Caco-2 (cell line): ENCODE measurements at regions of chr11 and their contacts with region 1.

Region 1: DNA sequence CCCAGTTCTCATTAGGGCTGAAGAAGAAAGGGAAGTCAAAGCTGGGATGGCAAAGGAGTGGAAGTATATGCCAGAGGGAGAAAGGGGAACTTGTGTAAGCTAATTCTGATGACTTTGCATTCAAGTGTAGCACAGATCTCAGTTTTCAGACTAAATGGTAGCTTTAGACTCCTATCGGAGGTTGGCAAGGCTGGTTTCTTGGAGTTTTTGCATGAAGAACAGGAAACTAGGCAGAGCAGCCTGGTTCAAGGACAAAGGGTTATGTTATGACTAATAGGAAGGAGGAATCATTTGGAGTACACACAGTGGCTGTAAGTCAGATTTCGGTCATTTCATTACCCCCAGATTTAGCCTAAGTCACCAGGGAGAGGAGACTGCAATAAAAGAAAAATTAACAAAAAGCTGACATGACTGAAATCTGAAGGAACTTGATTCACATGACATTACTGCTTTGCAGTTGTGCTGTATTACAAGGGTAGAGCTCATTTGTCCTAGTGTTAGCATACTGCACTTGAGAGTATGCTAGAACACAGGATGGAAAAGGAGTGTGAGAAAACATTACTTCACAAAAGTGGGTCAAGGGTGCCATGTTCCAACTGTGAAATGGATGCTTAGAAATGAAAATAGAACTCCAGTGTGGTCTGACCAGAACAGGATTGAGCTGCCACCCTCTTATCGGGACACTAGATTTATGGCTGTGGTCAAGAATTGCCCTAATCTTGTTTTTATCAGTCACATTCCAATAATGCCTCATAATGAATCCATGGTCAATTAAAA is 23.6 kb downstream of the ADM start:
- DNase-seq: peak; percentile 66 to 73
- H3K4me3 ChIP-seq: no peak overlapping the region
- H3K4me3 Mint-ChIP-seq: peak overlapping the region; percentile 39
- H3K27ac Mint-ChIP-seq: peak overlapping the region; percentile 14
- H3K4me1 ChIP-seq: peaks cover 63% of the 10 kb centered on the region
- H3K4me1 Mint-ChIP-seq: peaks cover 36% of the 10 kb centered on the region
- H3K27me3 ChIP-seq: no peaks in the 10 kb centered on the region
- H3K27me3 Mint-ChIP-seq: no peaks in the 10 kb centered on the region
- CTCF ChIP-seq: no peak

Region 2: GRCh38 chr11:10351768-10352641 is 23.5 kb after region 1 on chr11:
- CTCF ChIA-PET with region 1: interaction called, 6 read pairs
- POLR2A ChIA-PET with region 1: interaction called, 3 read pairs
- intact Hi-C with region 1: loop called (anchors 1 kb)
- DNase-seq: peak in 1 of 2 experiments; percentile 81
- H3K4me3 ChIP-seq: peak overlapping the region; percentile 20
- H3K4me3 Mint-ChIP-seq: peak overlapping the region; percentile 42
- H3K27ac Mint-ChIP-seq: peak overlapping the region; percentile 22
- H3K4me1 ChIP-seq: peaks cover 47% of the 10 kb centered on the region
- H3K4me1 Mint-ChIP-seq: peaks cover 14% of the 10 kb centered on the region
- H3K27me3 ChIP-seq: no peaks in the 10 kb centered on the region
- H3K27me3 Mint-ChIP-seq: no peaks in the 10 kb centered on the region
- CTCF ChIP-seq: no peak

Region 3: DNA sequence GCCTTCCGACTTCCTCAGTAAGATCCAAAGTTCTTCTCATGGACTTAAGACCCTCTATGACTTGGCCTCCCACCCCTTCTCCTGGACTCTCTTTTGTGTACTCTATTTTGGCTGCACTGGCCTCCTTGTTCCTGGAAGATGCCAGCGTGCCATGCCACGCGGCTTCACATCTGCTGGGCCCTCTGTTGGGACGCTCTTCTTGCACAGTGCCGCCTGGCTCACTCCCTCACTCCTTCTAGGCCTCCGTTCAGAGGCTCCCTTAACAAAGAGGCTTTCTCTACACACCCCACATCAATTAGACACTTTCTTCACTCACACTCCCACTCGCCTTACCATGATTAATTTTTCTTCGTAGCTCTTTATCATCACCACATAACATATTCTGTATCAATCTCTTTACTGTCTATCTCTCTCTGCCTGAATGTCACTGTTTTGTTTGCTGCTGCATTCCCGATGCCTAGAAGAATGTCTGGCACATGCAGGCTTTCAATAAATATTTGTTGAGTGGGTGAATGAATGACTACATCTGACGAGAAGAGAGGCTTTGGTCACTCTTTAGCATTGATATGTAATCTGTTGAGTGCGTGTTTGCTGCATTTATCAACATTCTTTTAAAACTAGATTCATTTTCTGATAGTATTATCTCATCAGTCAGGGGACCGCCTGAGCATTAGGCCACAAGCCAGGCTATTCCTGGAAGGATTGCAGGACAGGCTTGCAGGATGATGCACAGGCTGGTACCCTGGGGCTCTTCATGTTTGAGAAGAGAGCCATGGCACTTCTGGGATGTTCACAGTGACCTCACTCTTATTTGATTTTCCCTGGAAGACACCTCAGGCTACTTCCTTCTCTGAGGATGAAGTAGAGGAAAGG is 66.0 kb after region 1 on chr11:
- CTCF ChIA-PET with region 1: no interaction called
- POLR2A ChIA-PET with region 1: no interaction called
- intact Hi-C with region 1: loop called (anchors 1 kb)
- DNase-seq: peak; percentile 84 to 93
- H3K4me3 ChIP-seq: no peak overlapping the region
- H3K4me3 Mint-ChIP-seq: peak overlapping the region; percentile 57
- H3K27ac Mint-ChIP-seq: peak overlapping the region; percentile 80
- H3K4me1 ChIP-seq: peaks cover 66% of the 10 kb centered on the region
- H3K4me1 Mint-ChIP-seq: peaks cover 66% of the 10 kb centered on the region
- H3K27me3 ChIP-seq: no peaks in the 10 kb centered on the region
- H3K27me3 Mint-ChIP-seq: no peaks in the 10 kb centered on the region
- CTCF ChIP-seq: no peak

Region 4: DNA sequence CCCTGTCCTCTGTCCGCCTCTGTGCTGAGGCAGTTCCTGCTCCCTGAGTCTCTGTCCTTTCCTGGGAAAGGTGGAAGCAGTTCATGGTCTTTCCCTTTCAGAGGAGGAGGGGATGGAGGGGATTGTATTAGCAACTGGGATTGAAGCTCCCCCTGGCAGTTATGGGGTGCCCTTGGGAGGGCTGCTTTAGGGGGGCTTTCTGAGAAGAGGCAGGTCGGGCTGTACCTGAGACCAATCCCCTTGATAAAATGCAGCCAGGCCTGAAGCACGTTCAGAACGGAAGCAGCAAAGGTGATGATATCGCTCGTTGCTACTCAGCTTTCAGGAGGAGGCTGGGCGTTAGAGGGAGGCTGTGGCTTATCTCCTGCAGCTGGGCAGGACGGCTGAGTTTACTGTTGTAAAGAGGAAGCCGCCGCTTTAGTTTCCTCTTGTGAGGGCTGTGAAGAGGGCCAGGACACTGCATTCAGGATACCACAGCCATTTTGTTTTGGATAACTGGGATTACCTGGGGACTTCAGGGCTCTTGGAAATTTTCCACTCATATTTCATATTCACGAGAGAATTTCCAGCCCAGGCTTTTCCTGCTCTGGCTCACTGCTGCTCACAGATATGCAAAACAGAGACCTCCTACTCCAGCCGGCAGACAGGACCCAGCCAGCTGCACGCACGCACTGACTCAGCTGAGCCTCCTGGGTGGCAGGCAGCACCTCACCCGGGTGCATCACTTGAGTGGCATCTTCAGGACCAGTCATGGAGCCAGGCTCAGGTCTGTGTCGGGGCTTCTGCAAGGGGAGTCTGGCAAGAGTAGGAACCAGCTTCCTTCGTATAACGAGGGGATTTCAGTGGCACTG is 127.4 kb after region 1 on chr11:
- CTCF ChIA-PET with region 1: no interaction called
- POLR2A ChIA-PET with region 1: no interaction called
- intact Hi-C with region 1: loop called (anchors 5 kb)
- DNase-seq: peak; percentile 48 to 61
- H3K4me3 ChIP-seq: peak overlapping the region; percentile 21
- H3K4me3 Mint-ChIP-seq: peak overlapping the region; percentile 66
- H3K27ac Mint-ChIP-seq: peak overlapping the region; percentile 53
- H3K4me1 ChIP-seq: peaks cover 23% of the 10 kb centered on the region
- H3K4me1 Mint-ChIP-seq: peaks cover 6% of the 10 kb centered on the region
- H3K27me3 ChIP-seq: no peaks in the 10 kb centered on the region
- H3K27me3 Mint-ChIP-seq: no peaks in the 10 kb centered on the region
- CTCF ChIP-seq: no peak

Region 5: DNA sequence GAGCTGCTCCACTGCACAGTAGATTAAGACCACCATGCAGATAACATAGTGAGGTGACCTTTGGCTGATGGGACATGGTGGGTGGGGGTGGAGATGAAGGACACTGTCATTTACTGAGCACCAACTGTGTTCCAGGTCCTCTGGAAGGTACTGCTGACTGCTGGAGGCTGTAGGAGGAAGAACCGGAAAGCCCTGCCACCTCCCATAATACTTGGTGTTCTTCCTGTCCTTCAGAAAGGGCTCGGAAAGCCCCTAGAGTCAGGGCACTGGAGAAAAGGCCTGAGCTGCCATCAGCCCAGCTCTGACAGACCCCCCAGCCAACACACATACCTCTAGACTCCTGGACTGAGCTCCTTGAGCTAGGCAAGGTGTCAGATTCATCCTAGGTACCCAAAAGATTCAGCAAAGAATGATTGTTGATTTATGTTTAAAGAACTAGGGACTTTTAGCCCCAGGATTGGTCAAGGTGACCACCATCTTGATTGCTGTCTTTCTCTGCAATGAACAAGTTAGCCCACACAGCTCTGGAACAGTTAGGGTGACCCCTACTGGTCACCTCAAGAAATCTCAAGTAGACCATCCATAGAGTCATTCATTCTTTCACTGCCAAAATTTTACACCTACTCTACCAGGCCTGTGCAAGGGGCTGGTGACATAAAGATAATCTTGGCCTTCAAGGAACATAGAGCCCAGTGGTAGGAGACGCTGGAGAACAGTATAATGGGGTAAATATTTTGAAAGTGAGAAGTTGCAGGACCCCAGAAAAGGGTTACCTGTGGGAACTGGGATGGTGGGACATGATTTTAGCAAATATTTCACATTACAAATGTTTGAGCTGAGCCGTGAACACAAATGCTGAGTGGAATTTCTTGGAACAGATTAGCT is 325.7 kb after region 1 on chr11:
- CTCF ChIA-PET with region 1: no interaction called
- POLR2A ChIA-PET with region 1: no interaction called
- intact Hi-C with region 1: loop called (anchors 2 kb)
- DNase-seq: no peak
- H3K4me3 ChIP-seq: no peak overlapping the region
- H3K4me3 Mint-ChIP-seq: no peak overlapping the region
- H3K27ac Mint-ChIP-seq: peak overlapping the region; percentile 97
- H3K4me1 ChIP-seq: peaks cover 64% of the 10 kb centered on the region
- H3K4me1 Mint-ChIP-seq: peaks cover 16% of the 10 kb centered on the region
- H3K27me3 ChIP-seq: no peaks in the 10 kb centered on the region
- H3K27me3 Mint-ChIP-seq: no peaks in the 10 kb centered on the region
- CTCF ChIP-seq: peak; percentile 34 to 60